ENCODE measurements at regions of chr18 and their contacts with region 1.

Region 1: GRCh38 chr18:10378688-10379363 is 75.6 kb upstream of the APCDD1 start:
- DNase-seq: peak; percentile 78
- ATAC-seq: peak; percentile 53
- H3K4me3 ChIP-seq: no peak overlapping the region
- H3K27ac ChIP-seq: peak overlapping the region; percentile 61
- H3K4me1 ChIP-seq: peaks cover 24% of the 10 kb centered on the region
- H3K27me3 ChIP-seq: no peaks in the 10 kb centered on the region
- CTCF ChIP-seq: no peak
- POLR2A ChIP-seq: no peak
- RAD21 ChIP-seq: no peak

Region 2: DNA sequence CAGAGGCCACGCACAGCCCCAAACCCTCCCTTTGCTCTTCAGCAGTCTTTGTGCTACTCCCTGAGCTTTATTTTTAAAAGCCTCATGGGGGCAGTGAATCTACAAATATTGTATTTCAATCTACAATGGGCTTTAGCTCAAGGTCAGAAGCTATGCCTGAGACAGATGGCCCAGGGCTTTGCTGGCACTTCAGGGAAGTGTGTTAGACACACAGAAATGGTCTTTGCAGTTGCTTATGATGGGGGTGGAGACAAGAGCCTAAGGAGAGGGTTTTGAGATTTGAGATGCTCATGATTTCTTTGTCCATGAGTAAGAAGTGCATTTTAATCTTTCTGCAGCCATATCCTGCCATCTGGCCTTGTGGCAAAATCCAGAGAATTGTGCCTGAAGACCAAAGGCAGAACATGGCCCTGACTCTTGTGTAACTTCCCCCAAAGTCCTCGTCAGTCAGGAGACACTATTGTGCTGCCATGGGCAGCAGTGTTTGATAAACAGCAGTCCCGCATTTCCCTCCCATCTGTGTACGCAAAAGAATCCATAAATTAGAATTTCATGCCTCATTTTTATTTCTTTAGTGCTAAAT is 372.4 kb before region 1 on chr18:
- CTCF ChIA-PET with region 1: no interaction called
- POLR2A ChIA-PET with region 1: no interaction called
- dilution Hi-C with region 1: no loop called
- in situ Hi-C with region 1: no loop called
- intact Hi-C with region 1: loop called (anchors 10 kb)
- DNase-seq: peak; percentile 28
- ATAC-seq: no peak; the same call in 1 of the 2 replicates
- H3K4me3 ChIP-seq: no peak overlapping the region
- H3K27ac ChIP-seq: no peak overlapping the region
- H3K4me1 ChIP-seq: peaks cover 5% of the 10 kb centered on the region; the same call in 1 of the 2 replicates
- H3K27me3 ChIP-seq: peaks cover 11% of the 10 kb centered on the region
- CTCF ChIP-seq: peak; percentile 37
- POLR2A ChIP-seq: no peak
- RAD21 ChIP-seq: peak; percentile 45

Region 3: GRCh38 chr18:10122988-10123950 is 255.6 kb before region 1 on chr18:
- CTCF ChIA-PET with region 1: no interaction called
- POLR2A ChIA-PET with region 1: no interaction called
- dilution Hi-C with region 1: no loop called
- in situ Hi-C with region 1: no loop called
- intact Hi-C with region 1: no loop called
- DNase-seq: no peak
- ATAC-seq: no peak
- H3K4me3 ChIP-seq: no peak overlapping the region
- H3K27ac ChIP-seq: no peak overlapping the region
- H3K4me1 ChIP-seq: peaks cover 14% of the 10 kb centered on the region
- H3K27me3 ChIP-seq: peaks cover 3% of the 10 kb centered on the region; the same call in 1 of the 2 replicates
- CTCF ChIP-seq: no peak
- POLR2A ChIP-seq: no peak
- RAD21 ChIP-seq: no peak

Region 4: DNA sequence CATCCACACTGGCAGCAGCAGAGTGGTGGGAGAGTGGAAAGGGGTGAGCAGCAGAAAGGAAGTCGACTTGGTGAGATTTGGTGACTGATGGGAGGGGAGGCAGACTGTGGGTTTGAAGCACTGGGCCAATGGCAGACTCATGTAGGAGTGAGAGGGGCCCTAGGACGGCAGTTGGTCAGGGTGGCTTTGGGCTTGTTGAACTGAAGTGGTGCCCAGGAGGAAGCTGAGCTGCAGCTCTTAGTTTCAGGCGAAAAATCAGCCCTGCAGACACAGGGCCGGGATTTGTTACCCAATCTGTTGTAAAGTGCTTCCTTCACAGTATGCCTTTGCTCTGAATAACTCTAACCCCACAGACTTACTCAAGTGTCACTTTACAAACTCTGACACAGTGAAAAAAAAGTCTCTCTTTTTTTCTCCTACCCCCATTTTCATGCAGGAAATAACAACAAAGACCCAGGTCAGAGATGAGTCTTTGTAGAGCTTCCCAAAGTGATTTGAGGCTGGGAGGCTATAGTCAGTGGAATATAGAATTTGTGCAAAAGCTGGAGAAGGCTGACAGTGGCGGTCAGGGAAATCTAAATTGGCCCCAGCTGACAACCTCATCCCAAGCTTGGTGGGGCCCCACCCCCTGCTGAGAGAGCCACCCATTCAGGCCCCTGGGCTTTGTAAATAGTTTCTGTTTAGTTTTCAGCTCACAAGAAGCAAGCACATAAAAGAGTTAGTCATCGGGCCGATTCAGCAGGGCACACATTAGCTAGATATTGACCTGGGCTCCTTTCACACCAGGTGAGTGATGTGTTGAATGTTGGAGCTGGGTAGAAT is 238.2 kb before region 1 on chr18:
- CTCF ChIA-PET with region 1: no interaction called
- POLR2A ChIA-PET with region 1: no interaction called
- dilution Hi-C with region 1: no loop called
- in situ Hi-C with region 1: no loop called
- intact Hi-C with region 1: loop called (anchors 5 kb)
- DNase-seq: peak; percentile 52
- ATAC-seq: peak; percentile 45
- H3K4me3 ChIP-seq: no peak overlapping the region
- H3K27ac ChIP-seq: peak overlapping the region; percentile 63
- H3K4me1 ChIP-seq: peaks cover 32% of the 10 kb centered on the region
- H3K27me3 ChIP-seq: no peaks in the 10 kb centered on the region
- CTCF ChIP-seq: no peak
- POLR2A ChIP-seq: no peak
- RAD21 ChIP-seq: no peak

Measured in IMR-90 (cell line).